ENCODE measurements at regions of chr22 and their contacts with region 1.

Region 1: DNA sequence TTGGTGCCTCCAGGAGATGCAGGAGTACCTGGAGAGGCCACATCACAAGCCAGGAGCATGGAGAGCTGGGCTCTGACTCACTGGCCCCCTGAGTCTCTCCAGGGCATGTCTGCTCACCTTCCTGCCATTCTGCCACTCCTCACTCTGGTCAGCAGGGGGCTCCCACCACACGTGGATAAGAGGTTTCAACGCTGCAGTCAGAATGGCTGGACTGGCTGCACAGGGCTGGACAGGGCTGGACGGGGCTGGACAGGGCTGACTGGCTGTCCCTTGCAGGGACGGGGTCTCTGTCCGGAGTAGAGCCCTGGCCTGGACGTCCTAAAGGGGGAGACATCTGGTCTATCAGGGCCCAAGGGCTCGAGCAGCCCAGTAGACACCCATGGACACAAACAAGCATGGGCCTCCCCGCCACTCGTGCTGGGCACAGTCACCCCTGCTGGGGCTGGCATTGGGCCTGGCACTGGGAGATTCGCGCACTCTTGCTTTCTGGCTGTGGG is 34.6 kb downstream of the CYTH4 start:
- DNase-seq: peak; percentile 75 to 81 (median 76)
- ATAC-seq: peak; percentile 97
- H3K4me3 ChIP-seq: no peak overlapping the region
- H3K27ac ChIP-seq: no peak overlapping the region
- H3K4me1 ChIP-seq: no peaks in the 10 kb centered on the region; a peak in 2 of 5 replicates
- H3K27me3 ChIP-seq: peaks cover 0 to 20% of the 10 kb centered on the region in 2 experiments; a peak in 2 of 5 replicates
- CTCF ChIP-seq: peak; percentile 86 to 87 (median 87)
- EP300 ChIP-seq: no peak
- POLR2A ChIP-seq: no peak
- RAD21 ChIP-seq: peak; percentile 79 to 91

Region 2: GRCh38 chr22:37267135-37267587 is 49.8 kb before region 1 on chr22:
- CTCF ChIA-PET with region 1: no interaction called
- POLR2A ChIA-PET with region 1: no interaction called
- in situ Hi-C with region 1: no loop called
- intact Hi-C with region 1: loop called (anchors 2 kb)
- DNase-seq: peak; percentile 58 to 73 (median 68)
- ATAC-seq: peak; percentile 95
- H3K4me3 ChIP-seq: peak overlapping the region; percentile 23; the same call in 1 of the 2 replicates
- H3K27ac ChIP-seq: no peak overlapping the region
- H3K4me1 ChIP-seq: peaks cover 0 to 6% of the 10 kb centered on the region in 2 experiments; a peak in 3 of 5 replicates
- H3K27me3 ChIP-seq: no peaks in the 10 kb centered on the region; a peak in 3 of 5 replicates
- CTCF ChIP-seq: peak; percentile 71 to 73 (median 73)
- EP300 ChIP-seq: no peak
- POLR2A ChIP-seq: no peak
- RAD21 ChIP-seq: peak; percentile 58 to 79

Region 3: DNA sequence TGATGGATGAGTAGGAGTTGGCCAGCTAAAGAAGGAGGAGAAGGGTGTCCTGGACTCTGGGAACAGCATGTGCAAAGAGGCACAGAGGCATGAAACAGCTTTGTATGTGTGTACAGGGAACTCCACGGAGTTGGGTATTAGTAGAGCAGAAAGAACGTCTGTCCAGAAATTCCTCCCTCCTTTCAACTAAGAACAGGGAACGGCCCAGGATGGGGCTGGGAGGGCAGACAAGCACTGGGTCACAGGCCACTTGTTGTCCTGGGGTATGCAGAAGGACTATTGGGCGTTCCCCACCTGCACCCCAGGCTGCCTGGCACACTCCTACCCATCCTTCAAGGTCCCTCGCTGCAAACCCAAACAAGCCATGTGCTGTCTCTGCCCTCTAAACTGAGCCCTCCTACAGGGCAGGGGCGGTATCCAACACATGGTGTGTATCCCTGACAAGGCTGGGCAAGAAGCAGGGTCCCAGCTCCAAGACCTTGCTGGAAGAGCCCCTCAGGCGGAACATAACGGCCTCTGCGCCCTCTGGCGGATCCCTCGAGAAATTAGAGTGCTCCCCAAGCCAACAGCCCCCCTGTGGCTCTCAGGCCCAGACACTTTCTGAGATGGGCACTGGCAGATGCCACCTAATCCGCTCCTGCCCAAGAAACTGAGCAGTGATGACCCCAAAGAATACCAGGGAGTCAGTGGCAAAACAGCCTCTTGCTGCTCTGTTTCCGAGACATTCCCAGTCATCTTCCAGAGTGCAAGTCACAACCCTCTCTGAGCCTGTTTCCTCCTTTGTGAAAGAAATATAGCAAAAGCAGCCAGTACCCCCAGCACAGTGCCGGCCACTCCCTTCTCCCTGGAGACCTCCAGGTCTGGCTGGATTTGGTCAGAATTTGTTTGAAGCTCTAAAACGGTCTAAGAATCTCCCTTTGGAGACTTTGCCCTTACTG is 112.0 kb after region 1 on chr22:
- CTCF ChIA-PET with region 1: no interaction called
- POLR2A ChIA-PET with region 1: no interaction called
- in situ Hi-C with region 1: no loop called
- intact Hi-C with region 1: loop called (anchors 2 kb)
- DNase-seq: peak; percentile 51 to 61 (median 56)
- ATAC-seq: peak; percentile 77
- H3K4me3 ChIP-seq: no peak overlapping the region
- H3K27ac ChIP-seq: no peak overlapping the region
- H3K4me1 ChIP-seq: peaks cover 0 to 15% of the 10 kb centered on the region in 2 experiments; a peak in 2 of 5 replicates
- H3K27me3 ChIP-seq: peaks cover 7 to 59% of the 10 kb centered on the region in 2 experiments; a peak in 4 of 5 replicates
- CTCF ChIP-seq: peak; percentile 65 to 82 (median 71)
- EP300 ChIP-seq: no peak
- POLR2A ChIP-seq: no peak
- RAD21 ChIP-seq: peak; percentile 30 to 66; a peak in 3 of 4 replicates